AG04449 (cell line): ENCODE measurements at regions of chr5 and their contacts with region 1.

Region 1: DNA sequence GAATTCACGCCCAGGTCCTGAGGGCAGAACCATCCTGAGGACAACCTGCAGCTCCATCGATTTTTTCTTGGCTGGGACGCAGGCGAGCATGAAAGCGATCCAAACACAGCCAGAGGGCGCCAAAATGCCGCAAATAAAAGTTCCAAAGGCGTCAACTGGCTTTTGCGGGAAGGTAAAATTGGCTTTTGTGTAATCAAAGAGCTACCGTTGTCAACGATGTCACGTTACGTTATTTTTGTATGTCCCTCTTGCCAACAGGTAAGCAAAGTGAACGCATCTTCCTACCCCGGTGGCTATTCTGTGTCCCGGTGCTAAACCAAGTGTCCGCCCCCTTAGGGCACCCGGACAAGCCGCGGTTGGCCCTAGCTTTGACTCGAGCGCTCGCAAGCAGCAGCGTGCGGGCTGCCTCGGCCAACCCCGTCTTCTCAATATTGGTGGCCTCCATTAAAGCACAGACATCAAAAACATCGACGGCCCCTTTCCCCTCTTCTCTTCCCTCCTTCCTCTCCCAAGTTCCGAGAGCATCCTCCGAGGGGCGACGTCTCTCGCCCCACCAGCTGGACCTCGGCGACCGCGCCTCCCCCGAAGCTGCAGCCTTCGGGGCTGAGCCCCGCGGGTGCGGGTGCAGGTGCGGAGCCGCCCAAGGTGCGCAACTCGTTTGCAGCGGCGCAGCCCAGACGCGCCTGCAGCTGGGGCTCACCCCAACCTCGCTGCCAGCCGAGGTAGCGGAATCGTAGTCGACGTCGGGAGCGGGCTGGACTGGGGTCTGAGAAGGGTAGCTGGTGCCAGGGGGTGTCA is 1.1 kb upstream of the BASP1 start:
- DNase-seq: no peak
- H3K4me3 ChIP-seq: peak overlapping the region; percentile 95
- CTCF ChIP-seq: peak; percentile 75

Region 2: GRCh38 chr5:17379100-17379951 is 163.0 kb after region 1 on chr5:
- CTCF ChIA-PET with region 1: interaction called, 13 read pairs
- POLR2A ChIA-PET with region 1: no interaction called
- DNase-seq: no peak
- H3K4me3 ChIP-seq: no peak overlapping the region
- CTCF ChIP-seq: no peak

Region 3: GRCh38 chr5:18113721-18114120 is 897.3 kb after region 1 on chr5:
- CTCF ChIA-PET with region 1: interaction called, 19 read pairs
- POLR2A ChIA-PET with region 1: no interaction called
- DNase-seq: no peak
- H3K4me3 ChIP-seq: no peak overlapping the region
- CTCF ChIP-seq: peak; percentile 3

Region 4: DNA sequence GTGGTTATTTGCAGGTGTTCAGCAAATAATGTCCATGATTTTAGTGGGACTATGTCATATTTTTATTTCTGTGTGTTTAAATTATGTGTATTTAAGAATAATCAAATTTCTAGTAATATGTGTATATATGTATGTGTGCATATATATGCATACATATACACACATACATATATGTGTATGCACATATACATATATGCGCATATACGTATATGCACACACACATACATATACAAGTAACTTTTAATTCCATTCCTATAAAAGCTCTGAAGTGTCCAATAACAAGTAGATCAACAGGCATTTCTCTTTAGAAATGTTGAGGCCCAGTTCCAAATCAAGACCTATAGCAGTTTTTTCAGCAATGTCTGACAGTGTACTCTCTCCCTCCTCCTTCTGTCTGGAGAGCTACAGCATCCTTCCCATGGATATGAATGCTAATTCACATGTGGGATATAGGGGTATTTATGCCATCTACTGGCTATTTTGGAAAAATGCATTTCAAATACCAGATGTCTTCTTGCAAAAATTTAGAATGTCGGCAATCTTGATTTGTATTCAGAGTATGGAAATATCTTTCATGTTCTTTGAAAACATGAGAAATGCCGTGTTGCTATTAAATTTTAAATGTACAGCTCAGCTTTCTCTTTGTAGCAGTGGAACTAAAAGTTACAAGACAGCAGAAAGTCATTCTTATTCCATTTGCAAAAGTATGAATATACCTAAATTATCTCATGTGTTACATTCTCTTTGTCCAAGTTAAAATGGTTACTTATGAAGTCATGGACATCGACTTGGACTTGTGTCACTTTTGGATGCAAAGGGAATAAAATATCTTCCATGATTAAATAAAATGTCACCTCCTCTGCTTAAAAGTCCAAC is 1065.5 kb after region 1 on chr5:
- CTCF ChIA-PET with region 1: interaction called, 181 read pairs
- POLR2A ChIA-PET with region 1: interaction called, 3 read pairs
- DNase-seq: peak; percentile 9
- H3K4me3 ChIP-seq: no peak overlapping the region
- CTCF ChIP-seq: peak; percentile 34

Region 5: DNA sequence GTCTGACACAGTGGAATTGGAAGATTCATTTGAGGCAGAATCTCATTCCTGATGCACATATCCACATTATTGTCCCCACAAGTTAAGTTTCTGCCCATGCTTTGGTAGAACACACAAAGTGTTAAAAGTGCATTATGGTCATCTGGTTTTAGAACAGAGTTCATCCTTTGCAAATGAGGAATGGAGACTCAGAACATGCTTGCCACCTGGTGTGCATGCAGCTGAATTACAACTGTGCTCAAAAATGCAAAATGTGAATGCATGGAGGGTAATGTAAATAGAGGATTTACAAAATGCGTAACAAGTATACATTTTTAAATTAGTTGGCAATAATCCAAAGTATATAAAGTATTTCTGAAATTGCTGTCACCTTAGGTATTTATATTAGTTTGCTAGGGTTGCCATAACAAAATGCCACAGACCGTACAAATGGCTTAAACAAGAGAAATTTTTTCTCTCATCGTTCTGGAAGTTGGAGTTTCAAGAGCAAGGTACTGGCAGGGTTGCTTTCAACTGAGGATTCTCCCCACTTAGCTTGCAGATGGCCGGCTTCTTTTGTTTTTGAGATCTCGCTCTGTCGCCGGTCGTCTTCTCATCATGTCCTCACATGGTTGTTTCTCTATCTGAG is 1089.0 kb after region 1 on chr5:
- CTCF ChIA-PET with region 1: interaction called, 184 read pairs
- POLR2A ChIA-PET with region 1: no interaction called
- DNase-seq: no peak
- H3K4me3 ChIP-seq: no peak overlapping the region
- CTCF ChIP-seq: peak; percentile 73

Region 6: GRCh38 chr5:18314192-18314778 is 1097.9 kb after region 1 on chr5:
- CTCF ChIA-PET with region 1: interaction called, 61 read pairs
- POLR2A ChIA-PET with region 1: no interaction called
- DNase-seq: no peak
- H3K4me3 ChIP-seq: no peak overlapping the region
- CTCF ChIP-seq: no peak